ENCODE measurements at regions of chr16 and their contacts with region 1.

Region 1: GRCh38 chr16:11356573-11357331 is 11.5 kb downstream of the RMI2 start:
- DNase-seq: peak in 8 of 9 donors; percentile 17 to 55 (median 36)
- ATAC-seq: peak; percentile 47
- H3K4me3 ChIP-seq: no peak overlapping the region
- H3K4me3 Mint-ChIP-seq: peak overlapping the region in 5 of 10 donors; percentile 9 to 86 (median 31)
- H3K27ac ChIP-seq: no peak overlapping the region
- H3K27ac Mint-ChIP-seq: peak overlapping the region in 8 of 9 donors; percentile 22 to 99 (median 45)
- H3K4me1 ChIP-seq: peaks cover 33 to 51% of the 10 kb centered on the region in 2 donors
- H3K4me1 Mint-ChIP-seq: peaks cover 37 to 80% (median 68%) of the 10 kb centered on the region in 7 donors
- H3K27me3 ChIP-seq: no peaks in the 10 kb centered on the region
- H3K27me3 Mint-ChIP-seq: peaks cover 0 to 25% (median 4%) of the 10 kb centered on the region in 5 donors

Region 2: GRCh38 chr16:10964039-10964890 is 392.5 kb before region 1 on chr16:
- CTCF ChIA-PET with region 1: interaction called, 13 read pairs
- POLR2A ChIA-PET with region 1: interaction called, 4 read pairs
- intact Hi-C with region 1: loop called (anchors 1 to 2 kb)
- DNase-seq: peak; percentile 55 to 84 (median 69)
- ATAC-seq: peak; percentile 81
- H3K4me3 ChIP-seq: peak overlapping the region; percentile 3
- H3K4me3 Mint-ChIP-seq: peak overlapping the region in 6 of 10 donors; percentile 4 to 83 (median 52)
- H3K27ac ChIP-seq: no peak overlapping the region
- H3K27ac Mint-ChIP-seq: peak overlapping the region in 6 of 9 donors; percentile 47 to 91 (median 72)
- H3K4me1 ChIP-seq: peaks cover 11 to 18% of the 10 kb centered on the region in 2 donors
- H3K4me1 Mint-ChIP-seq: peaks cover 15 to 62% (median 28%) of the 10 kb centered on the region in 7 donors
- H3K27me3 ChIP-seq: no peaks in the 10 kb centered on the region
- H3K27me3 Mint-ChIP-seq: no peaks in the 10 kb centered on the region

Region 3: DNA sequence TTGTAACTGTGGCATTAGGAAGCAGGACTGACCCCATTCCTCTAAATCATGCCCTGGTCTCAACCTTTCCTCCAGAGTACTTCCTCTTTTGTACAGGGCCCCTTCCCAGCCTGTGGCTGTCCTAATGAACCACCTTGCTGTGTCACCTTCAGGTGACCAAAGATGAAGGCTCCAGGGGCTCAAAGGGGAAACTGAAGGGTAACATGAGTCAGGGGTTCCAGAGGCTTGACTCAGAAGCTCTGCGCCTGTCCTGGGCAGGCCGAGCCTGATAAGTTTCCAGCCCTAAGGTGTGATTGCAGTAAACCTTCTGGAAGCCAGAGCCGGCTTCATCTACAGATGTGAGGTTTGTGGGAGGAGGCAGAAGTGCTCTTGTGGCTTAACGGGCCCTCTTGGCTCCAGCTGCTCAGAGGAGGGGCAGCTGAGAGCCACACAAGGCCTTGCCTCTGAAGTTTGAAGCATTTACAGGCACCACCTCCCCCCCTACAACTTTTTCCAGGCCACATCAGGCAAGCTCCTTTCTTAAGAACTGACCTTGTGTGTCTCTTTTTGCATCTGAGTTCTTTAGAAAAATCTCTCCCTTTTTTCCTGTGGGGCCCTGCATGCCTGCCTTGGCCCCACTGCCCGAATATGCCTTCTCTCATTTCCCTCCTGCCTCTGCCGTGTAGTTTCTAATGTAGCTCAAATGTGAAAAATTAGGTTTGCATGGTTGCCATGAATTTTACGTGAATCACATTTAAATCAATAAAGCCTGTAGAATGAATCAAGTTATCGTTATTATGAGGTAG is 262.5 kb before region 1 on chr16:
- CTCF ChIA-PET with region 1: no interaction called
- POLR2A ChIA-PET with region 1: no interaction called
- intact Hi-C with region 1: loop called in 1 of 2 experiments (anchors 2 kb)
- DNase-seq: peak in 2 of 9 donors; percentile 7 to 68
- ATAC-seq: peak; percentile 53
- H3K4me3 ChIP-seq: no peak overlapping the region
- H3K4me3 Mint-ChIP-seq: peak overlapping the region in 9 of 10 donors; percentile 29 to 71 (median 63)
- H3K27ac ChIP-seq: peak overlapping the region; percentile 55
- H3K27ac Mint-ChIP-seq: peak overlapping the region; percentile 67 to 92 (median 85)
- H3K4me1 ChIP-seq: peaks cover 19 to 33% of the 10 kb centered on the region in 2 donors
- H3K4me1 Mint-ChIP-seq: peaks cover 21 to 70% (median 42%) of the 10 kb centered on the region in 7 donors
- H3K27me3 ChIP-seq: no peaks in the 10 kb centered on the region
- H3K27me3 Mint-ChIP-seq: no peaks in the 10 kb centered on the region

Region 4: GRCh38 chr16:11297492-11298142 is 59.1 kb before region 1 on chr16:
- CTCF ChIA-PET with region 1: interaction called, 6 read pairs
- POLR2A ChIA-PET with region 1: interaction called, 4 read pairs
- intact Hi-C with region 1: loop called (anchors 1 to 2 kb)
- DNase-seq: peak; percentile 50 to 70 (median 65)
- ATAC-seq: peak; percentile 95
- H3K4me3 ChIP-seq: peak overlapping the region; percentile 49
- H3K4me3 Mint-ChIP-seq: peak overlapping the region; percentile 76 to 87 (median 80)
- H3K27ac ChIP-seq: no peak overlapping the region
- H3K27ac Mint-ChIP-seq: peak overlapping the region; percentile 63 to 87 (median 77)
- H3K4me1 ChIP-seq: peaks cover 8% of the 10 kb centered on the region in 2 donors
- H3K4me1 Mint-ChIP-seq: peaks cover 9 to 53% (median 25%) of the 10 kb centered on the region in 7 donors
- H3K27me3 ChIP-seq: no peaks in the 10 kb centered on the region
- H3K27me3 Mint-ChIP-seq: peaks cover 0 to 19% (median 0%) of the 10 kb centered on the region in 5 donors

Region 5: DNA sequence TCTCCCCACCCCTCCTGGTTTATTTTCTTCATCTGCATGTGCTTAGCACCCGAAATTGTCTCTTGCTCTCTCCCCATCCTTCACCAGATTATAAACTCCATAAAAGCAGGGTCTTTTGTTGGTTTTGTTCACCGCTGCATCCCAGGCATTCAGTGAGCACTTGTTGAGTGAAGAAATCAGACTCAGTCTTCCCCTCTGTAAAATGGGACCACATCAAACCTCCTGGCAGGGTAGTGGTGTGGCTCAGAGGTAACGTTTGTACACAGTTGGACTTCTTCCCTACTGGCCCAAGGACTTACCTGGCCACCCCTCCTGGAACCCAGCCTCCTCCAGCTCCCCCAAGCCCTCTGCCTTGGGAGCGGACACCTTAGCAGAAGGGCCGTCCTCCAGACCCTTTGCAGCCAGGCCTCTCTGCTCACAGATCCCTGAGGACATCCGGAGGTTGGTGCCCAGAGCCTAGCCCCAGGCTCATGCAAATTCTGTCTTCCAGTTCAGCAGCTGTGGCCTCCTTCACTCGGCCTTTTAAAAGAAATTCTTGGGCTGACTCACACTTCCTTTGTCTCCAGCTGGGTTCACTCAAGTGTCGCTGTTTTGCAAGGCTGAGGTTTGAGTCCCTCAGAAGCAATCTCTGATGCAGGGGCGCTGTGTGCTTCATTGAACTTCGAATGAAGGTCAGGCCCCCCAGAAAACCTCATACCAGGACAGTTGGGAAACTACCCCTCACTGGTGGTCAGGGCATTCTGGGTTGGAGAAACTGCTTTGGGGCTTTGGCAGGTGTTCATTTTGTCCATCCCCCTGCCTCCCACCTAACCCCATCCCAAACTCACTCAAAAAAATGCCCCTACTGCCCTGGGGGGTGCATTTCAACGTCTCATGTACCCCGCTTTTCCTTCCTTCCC is 28.3 kb before region 1 on chr16:
- CTCF ChIA-PET with region 1: interaction called, 5 read pairs
- POLR2A ChIA-PET with region 1: interaction called, 3 read pairs
- intact Hi-C with region 1: loop called in 1 of 2 experiments (anchors 1 kb)
- DNase-seq: peak in 7 of 9 donors; percentile 24 to 52 (median 30)
- ATAC-seq: peak; percentile 83
- H3K4me3 ChIP-seq: peak overlapping the region; percentile 32
- H3K4me3 Mint-ChIP-seq: peak overlapping the region; percentile 46 to 85 (median 70)
- H3K27ac ChIP-seq: no peak overlapping the region
- H3K27ac Mint-ChIP-seq: peak overlapping the region; percentile 21 to 88 (median 73)
- H3K4me1 ChIP-seq: peaks cover 8 to 17% of the 10 kb centered on the region in 2 donors
- H3K4me1 Mint-ChIP-seq: peaks cover 11 to 68% (median 26%) of the 10 kb centered on the region in 7 donors
- H3K27me3 ChIP-seq: no peaks in the 10 kb centered on the region
- H3K27me3 Mint-ChIP-seq: peaks cover 0 to 4% (median 0%) of the 10 kb centered on the region in 5 donors